ENCODE measurements at regions of chr21 and their contacts with region 1.

Region 1: GRCh38 chr21:22791986-22792560 is 1793.9 kb downstream of the NCAM2 start:
- DNase-seq: peak; percentile 19
- H3K4me3 Mint-ChIP-seq: no peak overlapping the region
- H3K27ac Mint-ChIP-seq: no peak overlapping the region
- H3K4me1 Mint-ChIP-seq: no peaks in the 10 kb centered on the region
- H3K27me3 Mint-ChIP-seq: no peaks in the 10 kb centered on the region

Region 2: DNA sequence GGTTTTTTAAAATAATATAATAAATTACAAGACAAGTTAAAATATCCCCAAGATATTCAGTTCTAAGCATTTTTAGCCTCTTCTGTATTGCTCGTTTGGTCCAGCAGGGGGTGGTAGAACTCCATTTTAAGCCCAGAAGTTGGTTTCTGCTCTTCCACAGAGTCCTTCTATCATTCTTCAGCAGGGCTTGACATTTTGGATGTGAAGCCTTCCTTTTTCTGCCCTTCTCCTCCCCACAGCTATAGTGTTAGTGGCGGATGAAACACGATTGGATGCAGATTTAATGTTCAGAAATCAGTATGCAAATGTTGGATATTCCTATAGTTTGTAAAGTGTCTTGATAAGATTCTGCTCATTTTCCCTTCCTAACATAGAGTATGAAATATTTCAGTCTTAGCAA is 1792.4 kb before region 1 on chr21:
- CTCF ChIA-PET with region 1: interaction called, 3 read pairs
- intact Hi-C with region 1: loop called (anchors 1 kb)
- DNase-seq: peak; percentile 60
- H3K4me3 Mint-ChIP-seq: no peak overlapping the region
- H3K27ac Mint-ChIP-seq: no peak overlapping the region
- H3K4me1 Mint-ChIP-seq: peaks cover 12% of the 10 kb centered on the region
- H3K27me3 Mint-ChIP-seq: peaks cover 34% of the 10 kb centered on the region

Region 3: GRCh38 chr21:21232320-21232719 is 1559.8 kb before region 1 on chr21:
- CTCF ChIA-PET with region 1: interaction called, 3 read pairs
- intact Hi-C with region 1: loop called (anchors 2 kb)
- DNase-seq: no peak
- H3K4me3 Mint-ChIP-seq: no peak overlapping the region
- H3K27ac Mint-ChIP-seq: no peak overlapping the region
- H3K4me1 Mint-ChIP-seq: no peaks in the 10 kb centered on the region
- H3K27me3 Mint-ChIP-seq: no peaks in the 10 kb centered on the region

Region 4: GRCh38 chr21:22575165-22575584 is 216.9 kb before region 1 on chr21:
- CTCF ChIA-PET with region 1: interaction called, 7 read pairs
- intact Hi-C with region 1: loop called (anchors 2 kb)
- DNase-seq: peak; percentile 25
- H3K4me3 Mint-ChIP-seq: no peak overlapping the region
- H3K27ac Mint-ChIP-seq: no peak overlapping the region
- H3K4me1 Mint-ChIP-seq: no peaks in the 10 kb centered on the region
- H3K27me3 Mint-ChIP-seq: no peaks in the 10 kb centered on the region

Region 5: DNA sequence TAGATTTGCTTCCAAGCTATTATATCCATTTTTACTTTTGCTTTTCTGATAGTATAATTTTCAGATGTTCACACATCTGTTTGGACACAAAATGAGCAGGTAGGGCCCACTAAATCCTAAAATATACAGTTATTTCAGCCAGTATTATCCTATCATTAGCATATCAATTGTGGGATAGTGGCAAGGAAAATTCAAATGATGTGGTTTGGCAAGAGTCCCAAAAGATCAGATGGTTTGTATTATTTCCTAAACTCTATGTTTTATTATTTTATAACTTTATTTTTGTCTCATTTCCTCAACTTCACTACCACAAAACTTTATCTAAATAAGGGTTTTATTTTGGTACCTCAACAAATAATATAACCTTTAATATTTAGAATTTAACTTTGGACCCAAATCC is 134.3 kb before region 1 on chr21:
- CTCF ChIA-PET with region 1: no interaction called
- intact Hi-C with region 1: no loop called
- DNase-seq: no peak
- H3K4me3 Mint-ChIP-seq: no peak overlapping the region
- H3K27ac Mint-ChIP-seq: no peak overlapping the region
- H3K4me1 Mint-ChIP-seq: no peaks in the 10 kb centered on the region
- H3K27me3 Mint-ChIP-seq: no peaks in the 10 kb centered on the region

Region 6: DNA sequence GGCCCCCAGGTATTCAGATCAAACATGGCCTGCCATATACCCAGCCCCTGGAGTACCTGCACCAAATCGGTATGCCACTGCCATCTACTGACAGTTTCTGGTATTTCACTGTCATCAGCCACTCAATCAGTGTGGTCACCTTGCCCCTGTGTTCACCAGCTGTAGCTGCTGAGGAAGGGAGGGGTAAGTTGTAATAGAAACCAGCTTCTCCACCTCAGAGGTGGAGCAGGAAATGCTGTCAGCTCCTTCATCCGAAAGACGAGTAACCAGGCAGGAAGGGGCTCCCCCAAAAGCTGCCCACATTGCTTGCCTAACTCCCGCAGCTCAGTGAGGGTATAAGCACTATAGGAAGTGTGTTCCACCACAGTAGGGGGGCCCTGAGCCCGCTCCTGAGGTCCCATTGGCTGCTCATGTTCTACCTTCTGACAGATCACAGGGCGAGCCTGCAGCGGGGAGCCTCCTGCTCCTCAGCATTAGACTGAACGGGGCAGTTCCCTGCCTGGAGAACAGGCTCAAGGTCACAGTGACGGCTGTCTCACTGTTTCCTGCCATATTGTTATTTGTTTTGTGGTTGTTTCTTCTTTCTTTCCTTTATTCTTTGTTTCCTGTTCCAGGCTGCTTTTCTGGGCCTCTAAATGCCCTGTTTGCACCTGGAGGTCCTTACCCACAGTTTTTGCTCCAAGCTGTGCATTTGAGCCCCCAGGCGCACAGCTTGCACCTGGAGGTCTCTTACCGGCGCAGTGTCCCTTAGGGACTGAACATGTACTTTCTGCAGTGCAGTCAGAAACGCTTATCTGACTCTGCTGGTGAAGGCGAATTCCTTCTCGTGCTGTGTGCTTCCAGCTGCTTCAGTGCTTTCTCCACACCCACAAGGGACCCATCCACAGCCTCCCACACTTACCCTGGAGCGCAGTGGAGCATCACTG is 1176.9 kb after region 1 on chr21:
- CTCF ChIA-PET with region 1: interaction called, 3 read pairs
- intact Hi-C with region 1: loop called (anchors 2 kb)
- DNase-seq: peak; percentile 88
- H3K4me3 Mint-ChIP-seq: no peak overlapping the region
- H3K27ac Mint-ChIP-seq: peak overlapping the region; percentile 71
- H3K4me1 Mint-ChIP-seq: peaks cover 12% of the 10 kb centered on the region
- H3K27me3 Mint-ChIP-seq: no peaks in the 10 kb centered on the region